ENCODE measurements at regions of chr12 and their contacts with region 1.

Region 1: DNA sequence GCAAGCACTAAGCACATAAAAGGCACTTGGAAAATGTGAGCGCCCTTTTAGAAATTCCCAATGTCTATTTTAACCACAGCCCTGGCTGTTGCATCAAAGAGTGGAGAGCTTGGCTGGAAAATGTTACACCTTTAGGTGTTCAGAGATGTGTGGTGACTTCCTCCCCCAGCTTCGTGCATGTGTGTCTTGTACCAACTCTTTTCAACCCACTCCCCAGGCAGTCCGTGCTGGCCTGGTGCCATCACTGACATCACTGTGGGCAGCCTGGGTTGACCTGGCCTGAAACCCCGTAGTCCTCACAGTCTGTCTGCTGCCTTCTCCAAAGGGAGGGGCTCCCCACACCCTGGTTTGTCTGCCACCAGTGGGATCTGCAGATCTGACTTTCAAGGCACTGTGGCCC is 101.8 kb downstream of the SCARB1 start:
- DNase-seq: peak; percentile 59
- H3K4me3 Mint-ChIP-seq: no peak overlapping the region
- H3K27ac Mint-ChIP-seq: no peak overlapping the region
- H3K4me1 Mint-ChIP-seq: peaks cover 36% of the 10 kb centered on the region
- H3K27me3 Mint-ChIP-seq: peaks cover 5% of the 10 kb centered on the region

Region 2: GRCh38 chr12:124740691-124741137 is 21.2 kb before region 1 on chr12:
- CTCF ChIA-PET with region 1: interaction called, 32 read pairs
- intact Hi-C with region 1: loop called (anchors 1 kb)
- DNase-seq: peak; percentile 64
- H3K4me3 Mint-ChIP-seq: no peak overlapping the region
- H3K27ac Mint-ChIP-seq: no peak overlapping the region
- H3K4me1 Mint-ChIP-seq: peaks cover 30% of the 10 kb centered on the region
- H3K27me3 Mint-ChIP-seq: peaks cover 3% of the 10 kb centered on the region